ENCODE measurements at regions of chr1 and their contacts with region 1.

Region 1: DNA sequence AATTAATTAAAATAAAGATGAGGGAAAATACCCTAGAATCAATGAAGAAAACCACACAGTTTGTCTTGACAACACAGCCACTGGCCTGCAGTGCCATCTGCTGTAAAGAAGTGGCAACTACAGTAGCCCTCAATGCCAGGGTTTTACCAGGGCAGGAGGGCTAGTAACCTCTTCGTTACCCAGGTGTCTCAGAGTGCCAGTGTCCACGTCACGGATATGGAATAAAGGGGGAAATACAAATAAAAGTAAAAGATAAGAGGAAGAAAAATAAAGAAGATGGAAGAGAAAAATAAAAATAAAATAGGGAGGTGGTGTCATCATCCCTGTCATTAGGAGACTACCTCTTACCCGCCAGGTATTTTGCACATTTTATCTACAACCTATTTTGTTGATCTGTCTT is 14.2 kb upstream of the SLC44A3 start:
- DNase-seq: no peak
- H3K4me3 ChIP-seq: peak overlapping the region; percentile 0
- CTCF ChIP-seq: peak; percentile 74

Region 2: GRCh38 chr1:94025383-94026340 is 780.2 kb before region 1 on chr1:
- CTCF ChIA-PET with region 1: interaction called, 13 read pairs
- POLR2A ChIA-PET with region 1: no interaction called
- DNase-seq: no peak
- H3K4me3 ChIP-seq: no peak overlapping the region
- CTCF ChIP-seq: peak; percentile 41

Region 3: DNA sequence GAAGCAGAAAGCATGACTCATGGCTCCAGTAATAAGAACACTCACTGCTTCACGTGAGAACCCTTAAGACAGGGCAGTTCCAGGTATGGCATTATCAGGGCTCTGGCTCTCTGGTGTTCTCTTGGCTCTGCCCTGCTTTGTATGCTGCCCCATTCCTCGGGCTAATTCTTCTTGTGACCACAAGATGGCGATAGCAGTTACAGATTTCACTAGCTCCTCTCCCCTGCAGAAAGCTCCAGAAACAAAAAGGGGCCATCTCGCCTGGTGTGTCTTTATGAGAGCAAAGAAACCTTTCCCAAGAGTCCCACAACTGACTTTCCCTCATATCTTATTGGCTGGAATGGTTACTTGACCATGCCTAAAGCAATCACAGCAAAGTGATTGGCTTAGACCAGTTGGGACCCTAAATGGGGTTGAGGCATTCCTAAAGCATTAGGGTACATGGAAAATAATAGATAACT is 324.4 kb before region 1 on chr1:
- CTCF ChIA-PET with region 1: interaction called, 225 read pairs
- POLR2A ChIA-PET with region 1: no interaction called
- DNase-seq: peak; percentile 23
- H3K4me3 ChIP-seq: no peak overlapping the region
- CTCF ChIP-seq: peak; percentile 69

Region 4: DNA sequence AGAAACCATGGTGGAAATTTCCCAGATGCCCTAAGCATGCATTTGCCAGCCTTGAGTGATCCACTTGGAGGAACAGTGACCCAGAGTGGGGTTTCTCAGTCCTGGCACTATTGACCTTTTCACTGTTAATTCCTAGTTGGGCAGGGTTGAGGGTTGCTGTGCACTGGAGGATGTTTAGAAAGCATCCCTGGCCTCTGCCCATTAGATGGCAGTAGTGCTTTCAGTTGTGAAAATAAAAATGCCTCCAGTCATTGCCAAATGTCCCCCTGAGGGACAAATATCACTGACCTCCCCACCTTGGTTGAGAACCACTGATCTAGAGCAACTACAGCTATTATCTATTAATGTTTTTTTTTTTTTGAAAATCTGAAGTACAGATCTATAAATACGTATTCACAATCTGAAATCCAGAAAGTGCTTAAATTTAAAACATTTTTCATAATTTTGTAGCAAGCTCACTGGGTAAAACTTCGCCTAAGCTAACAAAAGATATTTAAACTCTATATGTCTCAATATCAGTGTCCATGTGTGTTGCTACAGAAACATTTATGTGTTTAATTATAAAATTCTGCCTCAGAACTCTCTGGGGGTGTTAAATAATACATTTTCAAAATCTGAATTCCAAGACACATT is 291.7 kb before region 1 on chr1:
- CTCF ChIA-PET with region 1: interaction called, 563 read pairs
- POLR2A ChIA-PET with region 1: interaction called, 3 read pairs
- DNase-seq: no peak
- H3K4me3 ChIP-seq: no peak overlapping the region
- CTCF ChIP-seq: peak; percentile 60

Region 5: DNA sequence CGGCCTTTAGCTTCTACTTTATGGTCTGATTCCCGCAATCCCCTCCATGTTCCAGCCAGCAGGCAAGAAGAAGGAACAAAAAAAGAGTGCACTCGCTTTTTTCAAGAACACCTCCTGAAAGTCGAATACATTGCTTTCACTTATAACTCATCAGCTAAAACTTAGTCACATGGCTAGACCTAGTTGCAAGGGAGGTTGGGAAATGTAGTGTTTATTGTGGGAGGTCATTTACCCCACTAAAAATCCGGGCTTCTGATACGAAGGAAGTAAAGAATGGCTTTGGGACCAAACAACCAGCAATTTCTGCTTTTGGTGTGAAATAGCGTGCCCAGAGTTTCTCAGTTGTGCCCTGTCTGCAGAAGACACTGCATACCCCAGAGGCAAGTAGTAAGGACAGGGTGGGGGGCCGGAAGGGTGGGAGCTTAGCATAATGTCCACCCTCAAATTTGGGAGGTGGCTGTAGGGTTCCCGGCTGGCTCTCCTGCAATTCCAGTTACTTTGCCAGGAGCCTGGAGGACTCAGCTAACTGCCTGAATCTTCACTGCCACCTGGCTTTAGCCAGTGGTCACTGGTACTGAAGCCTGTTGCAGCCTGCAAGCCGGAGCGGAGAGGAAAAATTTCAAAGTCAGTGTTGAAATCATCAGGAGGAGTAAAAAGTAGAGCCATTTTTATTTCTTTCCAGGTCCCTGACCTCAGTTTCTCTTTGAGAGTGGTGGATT is 206.7 kb before region 1 on chr1:
- CTCF ChIA-PET with region 1: interaction called, 10 read pairs
- POLR2A ChIA-PET with region 1: no interaction called
- DNase-seq: no peak
- H3K4me3 ChIP-seq: no peak overlapping the region
- CTCF ChIP-seq: peak; percentile 36

Region 6: DNA sequence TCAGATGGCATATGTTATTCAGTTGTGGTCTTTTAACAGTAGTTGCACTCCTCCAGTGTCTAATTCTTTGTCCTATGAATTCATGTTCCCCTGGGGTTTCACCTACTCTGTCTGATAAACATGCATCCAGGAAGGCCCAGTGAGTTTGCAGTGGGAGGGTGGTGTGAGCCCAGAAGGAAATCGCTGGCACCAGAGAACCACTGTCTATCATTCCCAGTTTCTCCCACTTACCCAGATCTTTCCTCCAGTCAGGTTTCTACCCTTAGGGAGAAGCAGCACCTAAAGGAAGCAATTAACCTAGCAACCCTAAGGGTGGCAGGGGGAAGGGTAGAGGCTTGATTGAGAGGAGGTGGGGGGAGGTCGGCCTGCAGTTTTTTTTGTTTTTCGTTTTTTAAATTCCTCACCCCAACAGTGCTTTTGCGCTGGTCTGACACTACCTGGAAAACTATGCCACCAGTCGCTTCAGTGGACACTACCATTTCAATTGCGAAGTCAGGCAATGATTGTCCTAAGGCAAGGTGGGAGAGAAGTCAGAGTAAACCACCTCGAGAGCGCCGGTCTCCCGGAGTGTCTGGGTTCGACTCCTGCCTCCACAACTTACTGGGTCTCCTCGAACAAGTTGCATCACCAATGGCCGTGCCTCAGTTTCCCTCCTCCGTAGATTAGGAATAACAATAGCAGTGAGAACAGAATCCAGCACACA is 13.5 kb after region 1 on chr1:
- CTCF ChIA-PET with region 1: interaction called, 20 read pairs
- POLR2A ChIA-PET with region 1: no interaction called
- DNase-seq: no peak
- H3K4me3 ChIP-seq: peak overlapping the region; percentile 61
- CTCF ChIP-seq: no peak